CD14-positive monocyte (primary cell): ENCODE measurements at regions of chr5 and their contacts with region 1.

Region 1: GRCh38 chr5:112921833-112922817 is at the start of gene REEP5:
- DNase-seq: peak; percentile 65 to 77 (median 76)
- H3K4me3 ChIP-seq: peak within 1 kb of the TSS; percentile 76 to 98 (median 90)
- H3K4me3 Mint-ChIP-seq: peak within 1 kb of the TSS; percentile 93 to 97
- H3K27ac ChIP-seq: peak within 1 kb of the TSS; percentile 92 to 93
- H3K27ac Mint-ChIP-seq: peak within 1 kb of the TSS; percentile 93 to 98 (median 96)
- H3K4me1 ChIP-seq: peaks cover 60 to 81% of the 10 kb centered on the region in 2 donors
- H3K4me1 Mint-ChIP-seq: peaks cover 70% of the 10 kb centered on the region
- H3K27me3 ChIP-seq: no peaks in the 10 kb centered on the region
- H3K27me3 Mint-ChIP-seq: peaks cover 0 to 4% (median 0%) of the 10 kb centered on the region in 3 donors
- CTCF ChIP-seq: peak; percentile 83
- polyA plus RNA-seq, gene REEP5: 83.6 to 200 (median 193) TPM

Region 2: GRCh38 chr5:112757468-112758208 is 164.5 kb before region 1 on chr5:
- intact Hi-C with region 1: no loop called
- DNase-seq: peak; percentile 27 to 67 (median 45)
- H3K4me3 ChIP-seq: no peak overlapping the region
- H3K4me3 Mint-ChIP-seq: no peak overlapping the region
- H3K27ac ChIP-seq: peak overlapping the region in 1 of 2 donors; percentile 30
- H3K27ac Mint-ChIP-seq: peak overlapping the region in 3 of 7 donors; percentile 48 to 73 (median 50)
- H3K4me1 ChIP-seq: no peaks in the 10 kb centered on the region
- H3K4me1 Mint-ChIP-seq: peaks cover 3% of the 10 kb centered on the region
- H3K27me3 ChIP-seq: no peaks in the 10 kb centered on the region
- H3K27me3 Mint-ChIP-seq: no peaks in the 10 kb centered on the region
- CTCF ChIP-seq: peak; percentile 81

Region 3: DNA sequence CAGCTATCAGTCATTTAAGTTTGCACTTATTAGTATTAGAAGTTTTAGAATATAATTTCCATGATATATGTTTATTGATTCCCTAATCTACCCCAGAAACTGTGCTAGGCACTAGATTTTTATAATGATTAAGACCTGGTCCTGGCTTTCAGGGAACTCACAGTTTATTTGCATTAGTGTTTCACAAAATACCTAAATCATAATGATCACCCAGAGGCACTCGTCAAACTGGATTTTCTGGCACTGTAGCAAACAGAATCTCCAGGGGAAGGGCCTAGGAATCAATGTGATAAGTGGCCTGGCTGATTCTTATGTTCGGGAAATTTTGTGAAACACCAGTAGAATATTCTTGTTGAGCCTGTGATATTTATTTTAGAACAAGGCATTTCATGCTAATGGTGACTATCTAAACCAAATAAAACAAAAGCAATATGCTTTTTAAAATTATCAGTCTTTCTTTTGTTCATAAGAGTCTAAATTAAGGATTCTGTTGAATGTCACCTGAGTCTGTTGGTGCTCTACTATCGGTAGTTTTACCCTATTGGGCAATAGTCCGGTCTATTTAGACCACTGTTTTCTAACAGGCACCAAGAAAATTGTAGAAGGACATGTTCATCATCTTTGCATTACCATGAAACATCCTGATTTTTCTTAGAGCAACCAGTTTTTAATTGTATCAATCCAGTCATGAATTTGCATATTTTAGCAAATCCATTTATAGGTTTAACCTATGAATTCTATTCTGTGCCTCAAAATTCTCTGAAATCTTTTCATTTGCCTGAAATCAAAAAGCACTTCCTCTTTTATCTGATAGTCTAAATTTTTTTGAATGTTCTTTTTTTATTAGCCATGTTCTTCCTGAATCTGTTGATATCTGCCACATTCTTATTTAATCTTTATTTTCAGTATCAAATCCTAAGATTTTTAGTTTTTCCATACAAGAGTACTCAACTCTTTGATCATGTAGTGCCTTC is 98.2 kb before region 1 on chr5:
- intact Hi-C with region 1: no loop called
- DNase-seq: no peak
- H3K4me3 ChIP-seq: no peak overlapping the region
- H3K4me3 Mint-ChIP-seq: no peak overlapping the region
- H3K27ac ChIP-seq: peak overlapping the region in 1 of 2 donors; percentile 1
- H3K27ac Mint-ChIP-seq: peak overlapping the region in 3 of 7 donors; percentile 22 to 62 (median 46)
- H3K4me1 ChIP-seq: no peaks in the 10 kb centered on the region
- H3K4me1 Mint-ChIP-seq: no peaks in the 10 kb centered on the region
- H3K27me3 ChIP-seq: no peaks in the 10 kb centered on the region
- H3K27me3 Mint-ChIP-seq: no peaks in the 10 kb centered on the region
- CTCF ChIP-seq: no peak

Region 4: GRCh38 chr5:112860929-112861637 is 61.0 kb before region 1 on chr5 and contains the start of gene SRP19:
- intact Hi-C with region 1: loop called in 1 of 2 experiments (anchors 5 kb)
- DNase-seq: peak; percentile 91 to 98 (median 95)
- H3K4me3 ChIP-seq: peak within 1 kb of the TSS; percentile 92 to 96 (median 95)
- H3K4me3 Mint-ChIP-seq: peak within 1 kb of the TSS; percentile 94 to 95
- H3K27ac ChIP-seq: peak within 1 kb of the TSS; percentile 89 to 92
- H3K27ac Mint-ChIP-seq: peak within 1 kb of the TSS; percentile 92 to 97 (median 95)
- H3K4me1 ChIP-seq: peaks cover 12 to 20% of the 10 kb centered on the region in 2 donors
- H3K4me1 Mint-ChIP-seq: peaks cover 29% of the 10 kb centered on the region
- H3K27me3 ChIP-seq: peaks cover 7 to 13% of the 10 kb centered on the region in 2 donors
- H3K27me3 Mint-ChIP-seq: peaks cover 3 to 9% (median 8%) of the 10 kb centered on the region in 3 donors
- CTCF ChIP-seq: no peak
- polyA plus RNA-seq, gene SRP19: 18.6 to 87.4 (median 71.9) TPM

Region 5: GRCh38 chr5:112960315-112960714 is 38.2 kb after region 1 on chr5:
- intact Hi-C with region 1: loop called in 1 of 2 experiments (anchors 5 kb)
- DNase-seq: no peak
- H3K4me3 ChIP-seq: no peak overlapping the region
- H3K4me3 Mint-ChIP-seq: no peak overlapping the region
- H3K27ac ChIP-seq: no peak overlapping the region
- H3K27ac Mint-ChIP-seq: no peak overlapping the region
- H3K4me1 ChIP-seq: peaks cover 30 to 43% of the 10 kb centered on the region in 2 donors
- H3K4me1 Mint-ChIP-seq: peaks cover 43% of the 10 kb centered on the region
- H3K27me3 ChIP-seq: peaks cover 0 to 2% of the 10 kb centered on the region in 2 donors
- H3K27me3 Mint-ChIP-seq: peaks cover 0 to 5% (median 3%) of the 10 kb centered on the region in 3 donors
- CTCF ChIP-seq: no peak

Region 6: GRCh38 chr5:112976432-112977309 is 54.5 kb after region 1 on chr5 and contains the start of gene DCP2:
- intact Hi-C with region 1: loop called in 1 of 2 experiments (anchors 5 kb)
- DNase-seq: peak; percentile 98 to 100 (median 98)
- H3K4me3 ChIP-seq: peak within 1 kb of the TSS; percentile 48 to 91 (median 70)
- H3K4me3 Mint-ChIP-seq: peak within 1 kb of the TSS; percentile 95 to 100
- H3K27ac ChIP-seq: peak within 1 kb of the TSS; percentile 87 to 91
- H3K27ac Mint-ChIP-seq: peak within 1 kb of the TSS; percentile 96 to 99 (median 97)
- H3K4me1 ChIP-seq: peaks cover 15 to 34% of the 10 kb centered on the region in 2 donors
- H3K4me1 Mint-ChIP-seq: peaks cover 42% of the 10 kb centered on the region
- H3K27me3 ChIP-seq: no peaks in the 10 kb centered on the region
- H3K27me3 Mint-ChIP-seq: peaks cover 0 to 4% (median 0%) of the 10 kb centered on the region in 3 donors
- CTCF ChIP-seq: no peak
- polyA plus RNA-seq, gene DCP2: 24.0 to 62.2 (median 58.9) TPM

Region 7: GRCh38 chr5:113005454-113005853 is 83.3 kb after region 1 on chr5:
- intact Hi-C with region 1: no loop called
- DNase-seq: no peak
- H3K4me3 ChIP-seq: no peak overlapping the region
- H3K4me3 Mint-ChIP-seq: no peak overlapping the region
- H3K27ac ChIP-seq: no peak overlapping the region
- H3K27ac Mint-ChIP-seq: no peak overlapping the region
- H3K4me1 ChIP-seq: no peaks in the 10 kb centered on the region
- H3K4me1 Mint-ChIP-seq: no peaks in the 10 kb centered on the region
- H3K27me3 ChIP-seq: no peaks in the 10 kb centered on the region
- H3K27me3 Mint-ChIP-seq: no peaks in the 10 kb centered on the region
- CTCF ChIP-seq: no peak

Region 8: DNA sequence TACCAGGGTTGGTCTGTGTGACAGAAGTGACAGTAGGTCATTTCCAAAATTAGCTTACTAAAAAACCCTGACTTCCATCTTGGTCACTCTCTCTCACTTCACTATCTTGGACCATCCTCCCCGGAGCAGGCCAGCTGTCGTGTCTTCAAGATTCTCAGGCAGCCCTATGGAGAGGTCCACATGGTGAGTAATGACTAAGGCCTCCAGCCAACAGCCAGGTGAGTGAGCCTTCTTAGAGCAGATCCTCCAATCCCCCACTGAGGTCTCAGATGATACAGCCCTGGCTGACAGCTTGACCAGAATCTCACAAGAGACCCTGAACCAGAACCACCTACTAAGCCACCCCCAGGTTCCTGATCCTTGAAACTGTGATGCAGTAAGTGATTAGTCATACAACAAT is 146.4 kb after region 1 on chr5:
- intact Hi-C with region 1: no loop called
- DNase-seq: no peak
- H3K4me3 ChIP-seq: no peak overlapping the region
- H3K4me3 Mint-ChIP-seq: no peak overlapping the region
- H3K27ac ChIP-seq: no peak overlapping the region
- H3K27ac Mint-ChIP-seq: no peak overlapping the region
- H3K4me1 ChIP-seq: no peaks in the 10 kb centered on the region
- H3K4me1 Mint-ChIP-seq: no peaks in the 10 kb centered on the region
- H3K27me3 ChIP-seq: no peaks in the 10 kb centered on the region
- H3K27me3 Mint-ChIP-seq: peaks cover 3 to 12% (median 5%) of the 10 kb centered on the region in 3 donors
- CTCF ChIP-seq: no peak